Heart right ventricle (tissue), 16 donors: ENCODE measurements at regions of chr5 and their contacts with region 1.

Region 1: DNA sequence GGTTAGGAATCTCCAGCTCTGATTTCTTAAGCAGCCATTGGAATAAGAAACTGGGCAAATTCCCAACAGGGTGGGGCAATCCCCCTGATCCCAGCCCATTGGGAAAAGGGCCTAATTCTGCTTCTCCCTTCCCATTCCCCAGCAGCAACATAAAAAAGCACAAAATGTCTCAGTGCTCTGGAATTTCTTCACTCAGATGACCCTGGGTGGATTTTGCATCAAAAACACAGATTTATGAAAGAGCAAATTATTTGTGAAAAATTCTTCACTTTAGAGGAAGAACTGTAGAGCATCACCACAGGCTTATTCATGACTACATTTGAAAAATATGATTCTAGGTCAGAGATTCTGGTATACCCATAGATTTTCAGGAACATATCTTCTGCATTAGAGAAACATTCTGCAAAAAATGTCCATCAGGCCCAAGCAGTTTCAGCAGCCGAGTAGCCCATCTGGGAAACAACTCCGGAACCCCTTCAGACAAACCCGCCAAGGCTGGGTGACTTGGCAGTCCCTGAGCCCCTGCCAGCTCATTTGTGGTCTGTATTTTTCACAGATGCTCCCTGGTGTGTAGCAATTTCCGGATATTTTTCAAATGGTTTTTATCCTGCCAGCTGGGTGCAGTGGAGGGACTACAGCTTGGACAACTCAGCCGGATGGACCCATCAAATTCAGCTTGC is 102.1 kb upstream of the RANBP3L start:
- DNase-seq: peak; percentile 15 to 22
- ATAC-seq: peak in 7 of 8 donors; percentile 24 to 72 (median 59)
- H3K4me3 ChIP-seq: no peak overlapping the region
- H3K27ac ChIP-seq: peak overlapping the region in 5 of 10 donors; percentile 5 to 34 (median 22)
- H3K4me1 ChIP-seq: peaks cover 0 to 16% (median 0%) of the 10 kb centered on the region in 9 donors
- H3K27me3 ChIP-seq: no peaks in the 10 kb centered on the region
- CTCF ChIP-seq: no peak

Region 2: DNA sequence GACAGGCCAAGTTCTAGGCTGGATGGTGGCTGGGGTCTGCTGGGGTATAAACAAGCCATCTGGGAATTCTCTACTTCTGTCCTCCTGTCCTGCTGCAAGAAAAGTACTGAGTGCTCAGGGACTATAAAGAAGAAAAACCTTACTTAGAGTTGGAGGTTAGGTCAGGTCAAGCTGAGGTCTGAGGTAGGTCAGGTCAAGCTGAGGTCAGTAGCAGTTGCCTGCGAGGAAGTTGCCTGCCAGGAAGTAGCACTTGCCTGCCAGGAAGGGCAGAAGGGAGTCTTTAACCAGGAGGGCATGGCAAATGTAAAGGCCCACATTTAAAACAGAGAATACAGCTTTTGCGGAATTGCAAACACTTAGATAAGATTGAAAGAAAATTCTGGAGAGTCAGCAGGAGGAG is 1122.2 kb before region 1 on chr5:
- intact Hi-C with region 1: no loop called
- DNase-seq: no peak
- ATAC-seq: no peak
- H3K4me3 ChIP-seq: no peak overlapping the region
- H3K27ac ChIP-seq: no peak overlapping the region
- H3K4me1 ChIP-seq: no peaks in the 10 kb centered on the region
- H3K27me3 ChIP-seq: no peaks in the 10 kb centered on the region
- CTCF ChIP-seq: no peak

Region 3: GRCh38 chr5:36177715-36178523 is 225.9 kb before region 1 on chr5:
- intact Hi-C with region 1: loop called in 4 of 10 experiments (anchors 5 to 10 kb)
- DNase-seq: no peak
- ATAC-seq: peak in 3 of 8 donors; percentile 49 to 57 (median 56)
- H3K4me3 ChIP-seq: no peak overlapping the region
- H3K27ac ChIP-seq: no peak overlapping the region
- H3K4me1 ChIP-seq: no peaks in the 10 kb centered on the region
- H3K27me3 ChIP-seq: no peaks in the 10 kb centered on the region
- CTCF ChIP-seq: peak; percentile 27 to 69 (median 59)